Endothelial cell of umbilical vein (primary cell): ENCODE measurements at regions of chr7 and their contacts with region 1.

Region 1: DNA sequence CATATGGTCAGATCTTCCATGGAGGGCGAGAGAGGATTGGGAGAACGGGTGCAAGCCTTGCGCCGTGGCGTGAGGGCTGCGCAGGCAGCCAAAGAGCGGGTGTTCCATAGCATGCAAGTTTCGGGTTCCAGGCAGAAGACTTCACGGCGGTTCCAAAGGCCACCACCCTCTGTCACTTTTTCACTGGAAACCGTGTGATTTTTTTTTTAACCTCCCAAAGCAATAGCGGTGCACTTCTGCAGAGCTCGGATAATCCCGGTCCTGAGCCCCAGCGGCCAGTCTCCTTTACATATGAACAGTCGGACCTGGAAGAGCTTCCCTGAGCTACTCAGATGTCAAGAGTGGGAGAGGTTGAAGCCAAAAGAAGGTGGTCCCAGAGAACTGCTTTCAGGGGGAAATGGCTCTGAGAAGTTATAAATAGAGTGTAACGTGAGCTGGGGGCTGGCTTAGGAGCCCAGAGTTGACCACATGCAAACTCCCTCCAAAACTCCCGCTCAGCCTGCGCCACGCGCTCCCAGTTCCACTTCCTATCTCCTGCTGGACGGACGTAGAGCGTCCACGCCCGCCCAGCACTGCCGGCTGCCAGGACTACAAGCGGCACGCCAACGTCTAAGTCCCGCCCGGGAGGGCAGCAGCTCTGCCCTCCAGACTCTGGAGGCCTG is at the start of gene MEOX2:
- DNase-seq: peak; percentile 87
- H3K4me3 ChIP-seq: peak within 1 kb of the TSS; percentile 61 to 95 (median 80)
- H3K27ac ChIP-seq: peak within 1 kb of the TSS; percentile 70
- H3K4me1 ChIP-seq: peaks cover 22% of the 10 kb centered on the region
- H3K27me3 ChIP-seq: no peaks in the 10 kb centered on the region
- CTCF ChIP-seq: no peak
- POLR2A ChIP-seq: peak; percentile 69
- total RNA-seq, gene MEOX2: 45.1 and 47.8 TPM in 2 replicates

Region 2: DNA sequence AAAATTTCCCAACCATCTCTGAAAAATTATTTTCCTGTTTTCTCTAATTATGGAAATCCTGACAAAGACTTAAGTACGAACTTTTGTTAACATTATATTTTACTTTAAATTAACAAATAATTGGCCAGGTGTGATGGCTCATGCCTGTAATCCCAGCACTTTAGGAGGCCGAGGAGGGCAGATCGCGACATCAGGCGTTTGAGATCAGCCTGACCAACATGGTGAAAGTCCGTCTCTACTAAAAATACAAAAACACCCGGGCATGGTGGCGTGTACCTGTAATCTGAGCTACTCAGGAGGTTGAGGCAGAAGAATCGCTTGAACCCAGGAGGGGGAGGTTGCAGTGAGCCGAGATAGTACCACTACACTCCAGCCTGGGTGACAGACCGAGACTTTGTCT is 816.0 kb before region 1 on chr7:
- CTCF ChIA-PET with region 1: no interaction called
- POLR2A ChIA-PET with region 1: no interaction called
- dilution Hi-C with region 1: no loop called
- intact Hi-C with region 1: no loop called
- DNase-seq: no peak
- H3K4me3 ChIP-seq: no peak overlapping the region
- H3K27ac ChIP-seq: no peak overlapping the region
- H3K4me1 ChIP-seq: no peaks in the 10 kb centered on the region
- H3K27me3 ChIP-seq: no peaks in the 10 kb centered on the region
- CTCF ChIP-seq: no peak
- POLR2A ChIP-seq: no peak

Region 3: DNA sequence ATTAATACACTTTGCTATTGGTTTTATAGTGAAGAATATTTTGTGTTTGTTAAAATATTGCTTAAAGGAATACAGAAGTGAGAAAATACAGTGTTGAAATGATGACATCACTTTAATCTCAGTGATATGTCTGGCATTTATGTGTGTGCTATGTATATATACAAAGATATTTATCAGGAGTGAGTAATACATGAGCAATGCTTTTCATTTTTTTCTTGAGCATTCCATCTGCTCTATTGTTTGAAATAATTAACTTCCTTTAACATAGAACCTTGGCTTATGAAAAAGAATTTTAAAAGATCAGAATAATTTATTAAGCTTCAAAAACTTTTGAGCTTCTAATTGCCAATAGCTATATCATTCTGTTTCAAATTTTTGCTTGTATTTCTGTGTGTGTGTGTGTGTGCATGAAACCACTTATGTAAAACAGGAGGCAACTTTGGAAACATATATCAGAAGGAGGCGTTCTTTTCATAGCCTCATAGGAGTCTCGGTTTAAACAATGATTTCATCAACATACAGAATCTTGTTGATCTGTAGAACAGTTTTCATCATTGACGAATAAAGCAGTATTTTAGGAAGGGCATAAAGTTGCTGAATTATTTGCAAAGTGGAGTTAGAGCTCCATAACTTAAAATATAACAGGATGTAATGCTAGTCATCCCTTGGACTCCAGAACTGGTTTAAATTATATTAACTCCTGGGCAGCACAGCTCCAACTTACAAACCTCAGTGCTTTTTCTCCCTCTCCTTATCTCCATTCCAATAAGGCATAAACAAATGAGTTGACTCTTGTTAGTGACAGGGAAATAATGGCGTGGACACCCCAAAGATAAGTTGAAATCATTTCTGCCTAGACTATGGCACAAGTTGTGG is 555.5 kb before region 1 on chr7:
- CTCF ChIA-PET with region 1: interaction called, 3 read pairs
- POLR2A ChIA-PET with region 1: no interaction called
- dilution Hi-C with region 1: no loop called
- intact Hi-C with region 1: loop called (anchors 2 kb)
- DNase-seq: peak; percentile 86
- H3K4me3 ChIP-seq: peak overlapping the region in 1 of 3 experiments; percentile 37
- H3K27ac ChIP-seq: peak overlapping the region; percentile 98
- H3K4me1 ChIP-seq: peaks cover 38% of the 10 kb centered on the region
- H3K27me3 ChIP-seq: no peaks in the 10 kb centered on the region
- CTCF ChIP-seq: no peak
- POLR2A ChIP-seq: no peak

Region 4: GRCh38 chr7:15280078-15280733 is 406.2 kb before region 1 on chr7:
- CTCF ChIA-PET with region 1: no interaction called
- POLR2A ChIA-PET with region 1: no interaction called
- dilution Hi-C with region 1: no loop called
- intact Hi-C with region 1: no loop called
- DNase-seq: no peak
- H3K4me3 ChIP-seq: no peak overlapping the region
- H3K27ac ChIP-seq: no peak overlapping the region
- H3K4me1 ChIP-seq: no peaks in the 10 kb centered on the region
- H3K27me3 ChIP-seq: no peaks in the 10 kb centered on the region
- CTCF ChIP-seq: no peak
- POLR2A ChIP-seq: no peak

Region 5: DNA sequence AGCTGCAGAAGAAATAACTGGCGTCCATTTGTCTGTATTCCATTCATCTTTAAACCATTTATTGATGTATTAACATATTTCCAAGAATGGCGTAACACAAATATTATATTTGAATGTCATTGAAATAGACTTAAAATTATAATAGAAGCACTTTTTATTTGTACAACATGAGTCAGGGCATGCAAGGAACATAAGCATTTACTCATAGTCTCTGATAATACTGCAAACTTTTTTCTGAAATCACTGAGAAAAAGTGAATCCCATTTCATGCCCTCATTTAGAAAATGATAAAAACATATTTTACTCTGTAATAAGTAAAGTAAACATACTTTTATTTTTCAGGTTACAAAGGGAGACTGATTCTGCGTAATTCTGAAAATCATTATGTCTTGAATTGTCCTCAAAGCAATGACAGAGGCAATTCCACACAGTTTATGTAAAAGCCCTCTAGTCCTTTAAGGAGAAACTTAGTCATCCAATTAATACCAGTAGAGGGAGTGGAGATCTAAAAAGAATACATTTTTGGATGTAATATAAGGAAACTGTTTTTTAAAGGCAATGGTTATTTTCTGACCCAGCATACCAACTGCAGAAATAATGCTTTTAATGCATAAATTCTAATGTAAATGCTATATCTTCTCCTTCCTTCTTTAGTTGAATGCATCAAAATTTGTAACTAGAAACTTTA is 182.7 kb before region 1 on chr7:
- CTCF ChIA-PET with region 1: interaction called, 3 read pairs
- POLR2A ChIA-PET with region 1: no interaction called
- dilution Hi-C with region 1: no loop called
- intact Hi-C with region 1: loop called (anchors 1 kb)
- DNase-seq: peak; percentile 76
- H3K4me3 ChIP-seq: no peak overlapping the region
- H3K27ac ChIP-seq: peak overlapping the region; percentile 71
- H3K4me1 ChIP-seq: peaks cover 54% of the 10 kb centered on the region
- H3K27me3 ChIP-seq: no peaks in the 10 kb centered on the region
- CTCF ChIP-seq: no peak
- POLR2A ChIP-seq: no peak

Region 6: DNA sequence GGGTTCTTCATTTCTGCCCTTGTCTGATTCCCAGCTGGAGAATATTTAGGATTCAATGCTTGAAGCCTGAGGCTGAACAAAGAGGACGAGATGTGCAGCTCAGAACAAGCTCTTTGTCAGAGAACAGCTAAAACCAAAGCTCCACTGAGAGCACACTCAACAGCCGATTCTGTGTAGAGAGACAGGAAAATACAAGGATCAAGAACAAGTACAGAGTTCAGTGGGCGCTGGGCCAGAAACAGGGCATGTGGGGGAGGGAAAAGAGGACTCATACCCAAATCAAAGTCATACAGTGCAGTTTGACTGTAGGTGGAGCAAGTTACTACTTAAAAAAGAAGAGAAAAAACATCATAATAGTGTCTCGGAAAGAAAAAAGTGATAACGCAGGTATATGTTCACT is 124.6 kb before region 1 on chr7 and contains the start of gene AGMO:
- CTCF ChIA-PET with region 1: no interaction called
- POLR2A ChIA-PET with region 1: no interaction called
- dilution Hi-C with region 1: no loop called
- intact Hi-C with region 1: no loop called
- DNase-seq: peak; percentile 37
- H3K4me3 ChIP-seq: no peak within 1 kb of the TSS
- H3K27ac ChIP-seq: no peak within 1 kb of the TSS
- H3K4me1 ChIP-seq: peaks cover 15% of the 10 kb centered on the region
- H3K27me3 ChIP-seq: no peaks in the 10 kb centered on the region
- CTCF ChIP-seq: no peak
- POLR2A ChIP-seq: no peak
- total RNA-seq, gene AGMO: 0.40 and 1.2 TPM in 2 replicates

Region 7: GRCh38 chr7:15593382-15593781 is 93.0 kb before region 1 on chr7:
- CTCF ChIA-PET with region 1: no interaction called
- POLR2A ChIA-PET with region 1: no interaction called
- dilution Hi-C with region 1: no loop called
- intact Hi-C with region 1: no loop called
- DNase-seq: no peak
- H3K4me3 ChIP-seq: no peak overlapping the region
- H3K27ac ChIP-seq: no peak overlapping the region
- H3K4me1 ChIP-seq: no peaks in the 10 kb centered on the region
- H3K27me3 ChIP-seq: no peaks in the 10 kb centered on the region
- CTCF ChIP-seq: no peak
- POLR2A ChIP-seq: no peak

Region 8: GRCh38 chr7:15737601-15738000 is 51.2 kb after region 1 on chr7:
- CTCF ChIA-PET with region 1: interaction called, 3 read pairs
- POLR2A ChIA-PET with region 1: no interaction called
- dilution Hi-C with region 1: no loop called
- intact Hi-C with region 1: loop called (anchors 1 kb)
- DNase-seq: peak; percentile 85
- H3K4me3 ChIP-seq: no peak overlapping the region
- H3K27ac ChIP-seq: no peak overlapping the region
- H3K4me1 ChIP-seq: no peaks in the 10 kb centered on the region
- H3K27me3 ChIP-seq: no peaks in the 10 kb centered on the region
- CTCF ChIP-seq: no peak
- POLR2A ChIP-seq: no peak

Region 9: DNA sequence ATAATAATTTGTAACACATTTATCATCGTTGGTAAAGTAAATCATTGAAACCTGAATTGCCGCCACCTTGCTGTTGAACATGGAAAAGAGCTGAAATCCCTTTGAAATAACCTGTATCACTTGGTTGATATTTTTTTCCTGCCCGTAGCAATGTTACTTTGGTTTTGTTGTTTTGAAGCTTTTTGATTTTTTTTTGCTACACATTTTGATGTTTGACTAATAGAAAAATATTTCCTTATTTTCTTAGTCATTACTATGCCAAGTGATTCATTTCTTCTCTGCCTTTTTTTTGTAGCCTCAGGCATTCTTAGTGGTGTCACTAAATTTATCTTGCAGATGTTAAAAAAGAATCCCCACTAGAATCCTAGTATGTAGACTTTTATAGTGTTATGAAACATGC is 235.2 kb after region 1 on chr7:
- CTCF ChIA-PET with region 1: interaction called, 3 read pairs
- POLR2A ChIA-PET with region 1: no interaction called
- dilution Hi-C with region 1: no loop called
- intact Hi-C with region 1: loop called (anchors 1 kb)
- DNase-seq: peak; percentile 59
- H3K4me3 ChIP-seq: peak overlapping the region in 2 of 3 experiments; percentile 28 to 40
- H3K27ac ChIP-seq: peak overlapping the region; percentile 26
- H3K4me1 ChIP-seq: peaks cover 13% of the 10 kb centered on the region
- H3K27me3 ChIP-seq: no peaks in the 10 kb centered on the region
- CTCF ChIP-seq: peak in 1 of 2 donors; percentile 1
- POLR2A ChIP-seq: no peak

Region 10: GRCh38 chr7:16420649-16421332 is 734.4 kb after region 1 on chr7:
- CTCF ChIA-PET with region 1: no interaction called
- POLR2A ChIA-PET with region 1: no interaction called
- dilution Hi-C with region 1: no loop called
- intact Hi-C with region 1: loop called (anchors 10 kb)
- DNase-seq: peak; percentile 92
- H3K4me3 ChIP-seq: peak overlapping the region; percentile 50 to 66 (median 54)
- H3K27ac ChIP-seq: peak overlapping the region; percentile 82
- H3K4me1 ChIP-seq: peaks cover 13% of the 10 kb centered on the region
- H3K27me3 ChIP-seq: no peaks in the 10 kb centered on the region
- CTCF ChIP-seq: peak in 1 of 2 donors; percentile 38
- POLR2A ChIP-seq: peak; percentile 88